ENCODE measurements at regions of chr3 and their contacts with region 1.

Region 1: DNA sequence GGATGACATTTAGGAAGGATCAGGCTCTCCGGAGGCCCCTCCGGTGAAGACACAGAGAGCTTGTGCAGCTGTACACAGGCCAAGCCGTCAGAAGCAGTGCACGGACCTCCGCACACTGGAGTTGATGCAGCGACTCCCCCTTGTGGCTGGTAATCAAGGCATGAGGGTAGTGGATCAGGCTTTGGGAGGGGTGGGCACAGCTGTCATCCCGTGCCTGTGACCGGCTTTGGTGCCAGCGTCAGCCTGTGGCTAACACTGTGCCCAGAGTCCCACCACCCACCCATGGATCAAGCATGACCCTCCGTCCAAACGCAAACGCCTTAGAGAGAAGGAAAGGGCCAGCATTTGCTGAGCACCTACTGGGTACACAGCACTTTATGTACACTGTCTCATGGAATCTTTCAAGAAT is 8.2 kb upstream of the GRIP2 start:
- DNase-seq: peak; percentile 33
- H3K4me3 ChIP-seq: no peak overlapping the region
- H3K27ac ChIP-seq: no peak overlapping the region
- H3K27me3 ChIP-seq: peaks cover 11% of the 10 kb centered on the region
- CTCF ChIP-seq: peak; percentile 80

Region 2: GRCh38 chr3:14345308-14346150 is 202.8 kb before region 1 on chr3:
- CTCF ChIA-PET with region 1: no interaction called
- POLR2A ChIA-PET with region 1: no interaction called
- DNase-seq: no peak
- H3K4me3 ChIP-seq: no peak overlapping the region
- H3K27ac ChIP-seq: no peak overlapping the region
- H3K27me3 ChIP-seq: peaks cover 22% of the 10 kb centered on the region
- CTCF ChIP-seq: no peak

Region 3: DNA sequence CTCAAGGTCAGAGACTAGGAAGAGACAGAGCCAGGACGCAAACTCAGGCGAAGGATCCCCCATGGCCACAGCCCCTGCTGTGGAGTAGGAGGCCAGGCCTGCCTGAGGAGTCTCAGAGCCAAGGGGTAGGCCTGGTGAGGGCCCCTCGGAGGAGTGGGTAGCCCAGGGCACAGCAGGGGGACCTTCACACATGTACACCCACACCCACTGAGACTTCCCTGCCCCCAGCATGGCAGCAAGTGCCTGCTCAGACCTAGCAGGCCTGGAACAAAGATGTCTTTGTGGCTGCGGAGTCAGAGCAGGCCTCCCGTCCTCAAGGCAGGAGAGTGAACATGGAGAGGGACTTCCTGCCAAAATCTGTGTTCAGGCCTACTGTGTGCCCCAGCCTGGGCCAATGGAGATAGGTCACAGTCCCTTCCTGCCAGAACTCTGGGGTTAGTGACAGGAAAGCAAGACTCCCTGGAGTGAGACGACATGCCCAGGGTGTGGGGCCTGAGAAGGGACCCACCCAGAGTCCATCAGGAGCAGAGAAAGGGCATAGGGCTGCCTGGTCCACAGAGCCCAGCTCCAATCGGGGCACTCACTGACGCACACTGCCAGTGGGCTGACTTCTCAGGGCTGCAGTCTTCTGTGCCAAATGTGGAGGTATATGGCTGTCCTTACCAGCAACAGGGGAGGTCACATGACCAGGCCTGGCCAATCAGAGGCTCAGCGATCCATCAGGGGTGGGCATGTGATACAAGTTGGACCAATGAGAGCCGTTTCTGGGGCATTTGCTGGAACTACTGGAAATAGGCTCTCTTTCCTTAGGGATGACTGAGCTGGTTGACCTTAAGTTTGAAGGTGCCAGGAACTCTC is 10.5 kb before region 1 on chr3:
- CTCF ChIA-PET with region 1: interaction called, 10 read pairs
- POLR2A ChIA-PET with region 1: no interaction called
- DNase-seq: no peak
- H3K4me3 ChIP-seq: no peak overlapping the region
- H3K27ac ChIP-seq: no peak overlapping the region
- H3K27me3 ChIP-seq: peaks cover 40% of the 10 kb centered on the region
- CTCF ChIP-seq: no peak

Region 4: DNA sequence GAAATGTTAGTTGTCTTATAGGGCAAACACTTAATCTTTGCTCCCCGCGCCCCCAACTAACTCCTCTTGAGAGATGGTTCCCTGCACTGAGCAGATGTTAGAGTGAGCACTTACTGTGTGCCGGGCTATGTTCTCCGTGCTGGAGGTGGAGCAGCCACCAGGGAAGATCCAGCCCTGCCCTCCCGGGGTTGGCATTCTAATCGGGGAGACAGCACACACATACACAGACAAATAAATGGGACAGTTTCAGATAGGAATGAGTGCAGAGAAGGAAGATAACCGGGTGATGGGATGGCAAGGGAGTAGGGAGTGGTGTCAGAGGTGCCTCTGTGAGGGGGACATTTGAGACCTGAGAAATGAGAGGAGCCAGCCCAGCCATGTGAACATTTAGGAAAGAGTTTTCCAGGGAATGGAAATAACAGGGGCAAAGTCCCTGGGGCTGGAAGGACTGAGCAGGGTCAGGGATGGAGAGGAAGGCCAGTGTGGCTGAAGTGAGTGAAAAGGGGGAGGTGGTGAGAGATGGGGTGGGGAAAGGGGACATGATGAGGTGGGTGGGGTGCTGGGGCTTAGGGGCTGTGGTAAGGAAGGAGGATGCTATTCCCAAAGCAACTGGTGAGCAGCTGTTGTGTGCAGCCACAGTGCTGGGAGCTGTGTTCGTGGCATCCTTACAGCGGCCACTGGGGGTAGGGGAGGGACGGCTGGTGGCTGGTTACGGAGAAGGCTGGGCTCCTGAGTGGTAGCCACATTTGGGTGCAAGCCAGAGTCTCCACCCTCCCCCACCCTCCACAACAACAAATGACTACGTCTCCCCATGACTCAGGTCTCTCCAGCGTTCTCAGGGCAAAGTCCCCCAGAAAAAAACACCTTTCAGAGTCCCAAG is 255.0 kb after region 1 on chr3:
- CTCF ChIA-PET with region 1: no interaction called
- POLR2A ChIA-PET with region 1: no interaction called
- DNase-seq: no peak
- H3K4me3 ChIP-seq: no peak overlapping the region
- H3K27ac ChIP-seq: no peak overlapping the region
- H3K27me3 ChIP-seq: peaks cover 11% of the 10 kb centered on the region
- CTCF ChIP-seq: no peak

Measured in AG04450 (cell line).